ENCODE measurements at regions of chrX and their contacts with region 1.

Region 1: DNA sequence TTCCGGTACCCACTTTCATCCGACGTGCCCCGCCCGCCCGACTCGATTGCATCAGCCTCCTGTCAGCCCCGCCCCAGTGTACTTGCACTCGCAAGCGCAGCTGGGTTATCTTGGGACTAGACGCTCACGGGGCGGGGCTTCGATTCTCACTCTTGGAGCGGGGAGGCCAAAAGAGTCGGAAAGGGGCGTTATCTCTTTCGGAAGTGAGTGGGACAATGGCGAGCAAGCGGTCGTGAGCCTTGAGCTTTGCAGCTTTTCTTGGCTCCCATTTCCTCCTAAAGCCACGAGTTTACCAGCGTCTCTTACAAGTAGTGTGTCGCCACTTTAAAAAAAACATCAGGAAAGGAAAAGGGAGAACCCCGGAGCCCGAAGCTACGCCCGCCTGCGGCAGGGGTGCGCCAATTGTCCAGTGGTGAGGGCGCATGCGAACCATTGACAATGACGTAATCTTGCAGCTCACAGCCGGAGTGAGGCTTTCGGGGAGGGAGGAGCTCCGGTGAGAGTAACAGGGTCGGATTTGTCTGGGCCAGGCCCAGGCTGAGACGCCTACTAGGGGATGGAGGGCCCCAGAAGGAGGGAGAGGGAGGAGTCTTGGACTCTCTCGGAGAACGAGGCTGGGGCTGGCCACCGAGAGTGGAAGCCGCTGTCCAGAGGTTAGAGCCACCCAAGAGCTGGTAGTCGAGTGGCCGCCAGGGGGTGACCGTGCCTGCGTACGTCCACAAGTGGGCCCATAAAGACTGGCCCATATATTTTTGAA is 109.5 kb downstream of the GNL3L start:
- DNase-seq: peak; percentile 89
- H3K4me3 Mint-ChIP-seq: peak overlapping the region; percentile 93
- H3K27ac Mint-ChIP-seq: peak overlapping the region; percentile 99
- H3K4me1 Mint-ChIP-seq: peaks cover 8% of the 10 kb centered on the region
- H3K27me3 Mint-ChIP-seq: no peaks in the 10 kb centered on the region

Region 2: DNA sequence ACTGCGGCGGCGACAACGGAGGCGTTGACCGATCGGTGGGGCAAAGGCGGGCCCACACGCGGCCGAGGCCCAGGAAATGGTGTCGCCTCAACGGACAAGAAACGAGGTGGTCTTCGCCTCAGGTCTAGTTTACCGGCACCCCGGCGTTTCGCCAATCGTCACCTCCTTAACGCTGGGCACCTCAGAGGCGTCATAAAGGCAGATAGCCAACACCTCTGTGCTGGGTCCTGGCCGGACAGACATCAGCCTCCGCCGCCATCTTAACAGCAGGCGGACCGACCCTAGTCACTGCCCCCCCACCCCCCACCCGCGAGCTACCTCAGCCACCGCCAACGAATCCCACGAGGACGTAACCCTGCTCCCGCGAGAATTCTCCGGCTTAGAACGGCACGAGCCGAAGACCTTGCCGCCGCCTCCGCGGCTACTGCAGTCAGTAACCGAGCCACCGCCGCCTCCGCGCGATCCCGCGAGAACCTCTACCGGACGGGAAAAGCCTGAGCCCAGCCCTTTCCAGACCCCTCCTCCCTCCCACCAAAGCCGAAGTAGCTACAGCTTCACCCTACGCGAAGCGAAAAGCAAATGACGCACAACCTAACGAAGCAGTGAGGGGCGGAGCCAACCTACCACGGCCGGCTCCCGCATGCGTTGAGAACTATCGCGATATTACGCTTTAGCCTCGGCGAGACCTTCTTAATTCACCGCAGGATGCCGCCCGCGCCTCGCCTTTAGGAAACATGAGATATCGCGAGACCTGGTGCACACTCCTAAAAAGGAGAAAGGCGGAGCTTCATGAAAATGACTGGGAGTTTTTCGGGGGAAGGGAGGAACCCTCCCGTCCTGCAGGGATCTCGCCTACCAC is 955.7 kb before region 1 on chrX:
- intact Hi-C with region 1: loop called (anchors 5 kb)
- DNase-seq: peak; percentile 90
- H3K4me3 Mint-ChIP-seq: peak overlapping the region; percentile 94
- H3K27ac Mint-ChIP-seq: peak overlapping the region; percentile 93
- H3K4me1 Mint-ChIP-seq: peaks cover 29% of the 10 kb centered on the region
- H3K27me3 Mint-ChIP-seq: no peaks in the 10 kb centered on the region

Region 3: GRCh38 chrX:54786962-54787361 is 147.4 kb after region 1 on chrX:
- intact Hi-C with region 1: loop called (anchors 5 kb)
- DNase-seq: no peak
- H3K4me3 Mint-ChIP-seq: no peak overlapping the region
- H3K27ac Mint-ChIP-seq: no peak overlapping the region
- H3K4me1 Mint-ChIP-seq: no peaks in the 10 kb centered on the region
- H3K27me3 Mint-ChIP-seq: peaks cover 2% of the 10 kb centered on the region

Region 4: GRCh38 chrX:54999717-55000598 is 360.4 kb after region 1 on chrX and contains the start of gene APEX2:
- intact Hi-C with region 1: loop called (anchors 2 kb)
- DNase-seq: peak; percentile 85
- H3K4me3 Mint-ChIP-seq: peak within 1 kb of the TSS; percentile 98
- H3K27ac Mint-ChIP-seq: peak within 1 kb of the TSS; percentile 88
- H3K4me1 Mint-ChIP-seq: peaks cover 14% of the 10 kb centered on the region
- H3K27me3 Mint-ChIP-seq: no peaks in the 10 kb centered on the region
- total RNA-seq, gene APEX2: 33.8 and 35.9 TPM in 2 replicates

Region 5: DNA sequence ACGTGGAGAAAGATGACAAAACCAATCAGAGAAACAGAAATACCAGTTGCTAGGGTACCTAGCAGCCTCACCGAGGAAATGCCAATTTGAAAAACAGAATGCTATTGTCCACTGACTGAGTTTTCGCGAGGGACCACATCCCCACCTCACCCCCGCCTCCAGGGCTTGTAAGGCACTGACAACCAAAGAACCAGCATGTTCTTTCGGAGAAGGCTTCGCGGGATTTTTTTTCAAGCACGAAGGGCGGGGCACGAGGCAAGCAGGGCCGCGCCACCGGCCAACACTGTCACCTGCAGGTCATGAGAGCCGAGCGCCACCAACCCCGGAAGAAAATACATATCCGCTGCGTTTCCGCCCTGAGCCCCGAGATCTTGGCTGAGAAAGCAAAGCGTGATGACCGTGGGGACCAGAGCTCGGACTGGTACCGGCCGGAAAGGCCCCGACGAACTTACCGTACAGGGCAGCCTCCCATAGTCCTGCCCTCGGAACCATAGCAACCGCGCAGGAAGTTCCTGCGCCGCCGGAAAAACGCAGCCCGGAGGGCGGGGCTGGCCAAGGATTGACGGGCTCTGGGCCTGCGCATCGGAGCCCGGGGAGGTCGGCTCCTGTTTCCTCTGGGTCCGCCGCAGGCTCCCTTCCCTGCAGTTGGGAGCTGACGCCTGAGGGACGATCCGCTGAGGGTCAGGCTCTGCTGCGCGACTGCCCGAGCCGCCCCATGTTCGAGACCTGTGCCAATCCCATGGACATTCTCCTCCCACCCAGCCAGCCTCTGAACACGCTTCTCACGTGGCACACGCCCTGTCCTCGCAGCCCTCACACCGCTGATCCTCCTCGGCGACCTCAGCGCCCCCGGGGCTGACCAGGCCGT is 521.4 kb after region 1 on chrX:
- intact Hi-C with region 1: loop called (anchors 2 kb)
- DNase-seq: peak; percentile 83
- H3K4me3 Mint-ChIP-seq: peak overlapping the region; percentile 82
- H3K27ac Mint-ChIP-seq: peak overlapping the region; percentile 90
- H3K4me1 Mint-ChIP-seq: peaks cover 14% of the 10 kb centered on the region
- H3K27me3 Mint-ChIP-seq: peaks cover 13% of the 10 kb centered on the region